CD14-positive monocyte (primary cell): ENCODE measurements at regions of chr6 and their contacts with region 1.

Region 1: GRCh38 chr6:163962627-163963117 is 548.2 kb downstream of the QKI start:
- DNase-seq: no peak
- H3K4me3 ChIP-seq: no peak overlapping the region
- H3K4me3 Mint-ChIP-seq: no peak overlapping the region
- H3K27ac ChIP-seq: no peak overlapping the region
- H3K27ac Mint-ChIP-seq: no peak overlapping the region
- H3K4me1 ChIP-seq: no peaks in the 10 kb centered on the region
- H3K4me1 Mint-ChIP-seq: no peaks in the 10 kb centered on the region
- H3K27me3 ChIP-seq: no peaks in the 10 kb centered on the region
- H3K27me3 Mint-ChIP-seq: peaks cover 4 to 9% (median 7%) of the 10 kb centered on the region in 3 donors
- CTCF ChIP-seq: no peak

Region 2: DNA sequence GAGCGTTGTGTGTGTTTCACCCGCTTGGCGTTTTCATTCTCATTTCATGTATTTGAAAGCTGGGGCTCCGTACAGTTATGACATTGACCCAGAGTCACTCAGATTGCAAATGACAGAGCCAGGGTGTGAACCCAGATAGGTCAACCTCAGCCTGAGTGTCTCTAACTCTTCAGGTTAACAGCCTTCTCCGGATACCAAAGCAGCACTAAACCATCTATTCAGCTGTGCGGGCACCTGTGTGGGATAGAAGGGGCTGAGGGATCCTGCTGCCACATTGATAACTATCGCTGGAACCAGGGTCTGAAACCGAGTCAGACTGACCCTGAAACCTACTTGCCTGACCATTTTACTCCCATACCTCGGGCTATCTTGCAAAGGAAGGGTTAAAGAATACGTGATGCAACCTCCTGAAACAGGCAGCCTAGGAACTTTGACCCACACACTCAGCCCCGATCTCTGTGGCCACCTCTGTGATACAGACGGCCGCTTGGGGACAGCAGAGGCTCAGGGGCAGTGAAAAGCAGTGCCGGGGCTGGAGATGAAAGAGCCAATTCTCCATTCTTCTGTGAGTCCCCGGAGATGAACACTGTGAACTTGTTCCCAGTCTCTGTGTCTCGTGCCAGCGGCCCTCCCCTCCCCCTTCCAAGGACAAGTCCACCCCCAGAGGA is 781.7 kb before region 1 on chr6:
- intact Hi-C with region 1: loop called (anchors 5 to 10 kb)
- DNase-seq: peak; percentile 30 to 53 (median 38)
- H3K4me3 ChIP-seq: no peak overlapping the region
- H3K4me3 Mint-ChIP-seq: no peak overlapping the region
- H3K27ac ChIP-seq: no peak overlapping the region
- H3K27ac Mint-ChIP-seq: no peak overlapping the region
- H3K4me1 ChIP-seq: no peaks in the 10 kb centered on the region
- H3K4me1 Mint-ChIP-seq: peaks cover 9% of the 10 kb centered on the region
- H3K27me3 ChIP-seq: no peaks in the 10 kb centered on the region
- H3K27me3 Mint-ChIP-seq: peaks cover 2 to 3% (median 2%) of the 10 kb centered on the region in 3 donors
- CTCF ChIP-seq: peak; percentile 74